Gastrocnemius medialis (tissue), 4 donors: ENCODE measurements at regions of chr13 and their contacts with region 1.

Region 1: DNA sequence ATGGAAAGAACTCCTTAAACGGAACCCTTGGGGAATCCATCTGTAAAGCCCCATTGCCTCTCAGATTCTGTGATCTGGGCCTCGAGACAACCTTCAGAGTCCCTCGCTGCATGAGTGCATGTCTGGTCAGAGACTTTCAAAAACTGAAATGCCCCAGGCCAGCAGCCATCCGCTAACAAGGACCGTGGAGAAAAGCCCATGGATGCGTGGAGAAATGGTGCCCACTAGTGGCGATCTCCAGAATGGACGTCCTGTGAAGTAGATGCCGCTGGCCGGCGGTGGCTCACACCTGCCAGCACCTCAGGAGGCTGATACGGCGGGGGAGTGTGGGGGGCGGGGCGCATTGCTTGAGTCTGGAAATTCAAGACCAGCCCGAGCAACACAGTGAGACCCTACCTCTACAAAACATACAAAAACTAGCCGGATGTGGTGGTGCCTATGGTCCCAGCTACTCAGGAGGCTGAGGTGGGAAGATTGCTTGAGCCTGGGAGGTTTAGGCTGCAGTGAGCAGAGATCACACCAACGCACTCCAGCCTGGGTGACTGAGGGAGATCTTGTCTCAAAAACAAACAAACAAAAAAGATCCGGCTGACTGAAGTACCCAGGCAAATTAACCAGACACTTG is 7.9 kb upstream of the CDC16 start:
- DNase-seq: peak; percentile 67 to 82
- ATAC-seq: peak; percentile 89 to 98
- H3K4me3 ChIP-seq: no peak overlapping the region
- H3K27ac ChIP-seq: no peak overlapping the region
- H3K4me1 ChIP-seq: peaks cover 0 to 3% of the 10 kb centered on the region in 2 donors
- H3K27me3 ChIP-seq: peaks cover 0 to 10% (median 0%) of the 10 kb centered on the region in 3 donors
- CTCF ChIP-seq: peak; percentile 93 to 98 (median 96)
- POLR2A ChIP-seq: no peak

Region 2: GRCh38 chr13:113951246-113951999 is 275.4 kb before region 1 on chr13:
- in situ Hi-C with region 1: no loop called
- intact Hi-C with region 1: loop called (anchors 1 kb)
- DNase-seq: peak; percentile 76 to 82
- ATAC-seq: peak; percentile 88 to 91
- H3K4me3 ChIP-seq: peak overlapping the region in 3 of 4 donors; percentile 1 to 51 (median 22)
- H3K27ac ChIP-seq: no peak overlapping the region
- H3K4me1 ChIP-seq: peaks cover 7 to 9% of the 10 kb centered on the region in 2 donors
- H3K27me3 ChIP-seq: no peaks in the 10 kb centered on the region
- CTCF ChIP-seq: peak; percentile 85 to 96 (median 87)
- POLR2A ChIP-seq: no peak

Region 3: DNA sequence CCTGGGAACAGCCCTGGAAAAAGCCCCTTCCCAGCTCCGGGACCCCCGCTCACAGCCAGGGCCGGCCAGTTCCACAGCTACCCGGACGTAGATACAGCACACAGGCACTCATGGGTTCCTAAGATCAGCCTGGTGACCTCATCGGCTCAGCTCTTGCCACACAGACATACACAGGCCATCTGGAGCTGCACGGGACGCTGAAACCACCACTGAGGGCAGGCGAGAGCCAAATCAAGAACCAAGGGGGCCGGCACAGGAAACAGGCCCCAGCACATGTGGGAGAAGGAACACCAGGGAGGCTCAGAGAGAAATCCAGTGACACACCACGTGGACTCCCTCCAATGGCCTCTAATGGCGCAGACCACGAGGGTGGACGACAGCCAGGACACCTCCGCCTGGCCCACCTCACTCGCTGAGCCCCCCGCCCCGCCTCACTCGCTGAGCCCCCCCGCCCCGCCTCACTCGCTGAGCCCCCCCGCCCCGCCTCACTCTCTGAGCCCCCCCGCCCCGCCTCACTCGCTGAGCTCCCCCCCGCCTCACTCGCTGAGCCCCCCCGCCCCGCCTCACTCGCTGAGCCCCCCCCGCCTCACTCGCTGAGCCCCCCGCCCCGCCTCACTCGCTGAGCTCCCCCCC is 183.3 kb before region 1 on chr13:
- in situ Hi-C with region 1: no loop called
- intact Hi-C with region 1: loop called (anchors 5 kb)
- DNase-seq: peak; percentile 71 to 79
- ATAC-seq: peak; percentile 85 to 96
- H3K4me3 ChIP-seq: peak overlapping the region in 1 of 4 donors; percentile 2
- H3K27ac ChIP-seq: peak overlapping the region in 3 of 4 donors; percentile 4 to 70 (median 59)
- H3K4me1 ChIP-seq: peaks cover 6 to 8% of the 10 kb centered on the region in 2 donors
- H3K27me3 ChIP-seq: no peaks in the 10 kb centered on the region
- CTCF ChIP-seq: peak in 2 of 5 experiments; percentile 20 to 49
- POLR2A ChIP-seq: no peak